CD14-positive monocyte (primary cell): ENCODE measurements at regions of chr1 and their contacts with region 1.

Region 1: GRCh38 chr1:174769961-174770549 is 229.7 kb upstream of the CACYBP start:
- DNase-seq: peak; percentile 37 to 64 (median 46)
- H3K4me3 ChIP-seq: no peak overlapping the region
- H3K4me3 Mint-ChIP-seq: no peak overlapping the region
- H3K27ac ChIP-seq: no peak overlapping the region
- H3K27ac Mint-ChIP-seq: no peak overlapping the region
- H3K4me1 ChIP-seq: no peaks in the 10 kb centered on the region
- H3K4me1 Mint-ChIP-seq: peaks cover 2% of the 10 kb centered on the region
- H3K27me3 ChIP-seq: no peaks in the 10 kb centered on the region
- H3K27me3 Mint-ChIP-seq: no peaks in the 10 kb centered on the region
- CTCF ChIP-seq: peak; percentile 84

Region 2: DNA sequence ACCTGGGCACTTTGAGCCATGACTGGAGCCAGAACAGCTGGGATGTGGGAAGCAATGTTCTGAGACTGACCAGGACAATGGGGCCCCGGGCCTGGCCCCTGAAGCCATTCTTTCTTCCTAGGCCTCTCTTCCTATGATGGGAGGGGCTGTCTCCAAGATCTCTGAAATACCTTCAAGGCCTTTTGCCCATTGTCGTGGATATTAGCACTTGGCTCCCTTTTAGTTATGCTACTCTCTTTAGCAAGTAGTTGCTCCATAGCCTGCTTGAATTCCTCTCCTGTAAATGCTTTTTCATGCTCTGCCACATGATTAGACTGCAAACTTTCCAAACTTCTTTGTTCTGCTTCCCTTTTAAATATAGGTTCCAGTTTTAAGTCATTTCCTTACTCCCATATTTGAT is 33.2 kb before region 1 on chr1:
- intact Hi-C with region 1: no loop called
- DNase-seq: no peak
- H3K4me3 ChIP-seq: no peak overlapping the region
- H3K4me3 Mint-ChIP-seq: no peak overlapping the region
- H3K27ac ChIP-seq: no peak overlapping the region
- H3K27ac Mint-ChIP-seq: no peak overlapping the region
- H3K4me1 ChIP-seq: peaks cover 9 to 21% of the 10 kb centered on the region in 2 donors
- H3K4me1 Mint-ChIP-seq: peaks cover 26% of the 10 kb centered on the region
- H3K27me3 ChIP-seq: no peaks in the 10 kb centered on the region
- H3K27me3 Mint-ChIP-seq: peaks cover 0 to 2% (median 0%) of the 10 kb centered on the region in 3 donors
- CTCF ChIP-seq: no peak

Region 3: GRCh38 chr1:174982971-174983689 is 213.1 kb after region 1 on chr1:
- intact Hi-C with region 1: loop called in 1 of 2 experiments (anchors 5 kb)
- DNase-seq: peak; percentile 51 to 58 (median 51)
- H3K4me3 ChIP-seq: no peak overlapping the region
- H3K4me3 Mint-ChIP-seq: no peak overlapping the region
- H3K27ac ChIP-seq: no peak overlapping the region
- H3K27ac Mint-ChIP-seq: peak overlapping the region in 1 of 7 donors; percentile 20
- H3K4me1 ChIP-seq: no peaks in the 10 kb centered on the region
- H3K4me1 Mint-ChIP-seq: peaks cover 1% of the 10 kb centered on the region
- H3K27me3 ChIP-seq: no peaks in the 10 kb centered on the region
- H3K27me3 Mint-ChIP-seq: no peaks in the 10 kb centered on the region
- CTCF ChIP-seq: peak; percentile 87